ENCODE measurements at regions of chr1 and their contacts with region 1.

Region 1: DNA sequence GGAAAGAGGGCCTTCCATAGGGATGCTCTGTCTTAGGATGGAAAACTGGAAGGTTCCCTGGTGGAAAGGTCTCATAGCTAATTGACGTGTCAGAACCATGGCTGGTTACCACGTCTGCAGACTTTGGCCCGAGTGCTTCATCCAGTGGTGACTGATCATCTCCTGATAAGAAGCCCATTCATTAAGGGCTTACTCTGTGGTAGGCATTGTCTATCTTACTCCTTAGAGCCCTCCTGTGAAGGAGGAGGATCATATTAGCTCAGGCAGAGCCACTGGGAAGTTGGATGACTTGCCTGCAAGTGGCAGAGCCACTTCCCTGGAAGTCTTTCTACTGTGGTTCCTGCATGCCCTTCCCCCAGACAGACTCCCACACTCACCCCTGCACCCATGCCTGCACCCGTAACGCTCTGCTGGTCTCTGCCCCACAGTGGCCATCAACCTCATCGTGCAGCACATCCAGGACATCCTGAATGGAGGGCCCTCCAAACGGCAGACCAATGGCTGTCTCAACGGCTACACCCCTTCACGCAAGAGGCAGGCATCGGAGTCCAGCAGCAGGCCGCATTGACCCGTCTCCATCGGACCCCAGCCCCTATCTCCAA is 79.9 kb downstream of the UCK2 start:
- DNase-seq: no peak
- ATAC-seq: no peak
- H3K4me3 ChIP-seq: no peak overlapping the region
- H3K27ac ChIP-seq: no peak overlapping the region
- H3K4me1 ChIP-seq: peaks cover 0 to 27% (median 20%) of the 10 kb centered on the region in 9 donors
- H3K27me3 ChIP-seq: no peaks in the 10 kb centered on the region
- CTCF ChIP-seq: no peak

Region 2: DNA sequence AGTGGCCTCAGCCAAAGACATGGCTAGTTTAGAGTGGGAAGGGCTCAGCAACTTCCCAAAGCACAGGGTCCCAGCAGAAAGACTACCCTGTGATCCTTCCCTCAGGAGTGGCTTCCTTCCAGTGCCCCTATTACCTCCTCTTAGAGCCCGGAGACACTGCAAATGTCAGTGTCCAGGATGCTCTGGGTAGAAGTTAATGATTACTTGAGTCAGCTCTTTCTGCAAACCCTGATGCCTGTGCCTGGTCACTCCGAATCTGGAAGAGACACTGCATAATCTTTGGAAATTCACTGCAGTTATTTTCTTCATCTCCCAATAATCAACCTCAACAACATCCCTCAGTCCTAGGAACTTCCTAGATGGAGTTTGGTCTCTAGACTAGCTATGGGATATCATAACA is 303.5 kb before region 1 on chr1:
- intact Hi-C with region 1: loop called in 4 of 10 experiments (anchors 5 kb)
- DNase-seq: no peak
- ATAC-seq: no peak
- H3K4me3 ChIP-seq: no peak overlapping the region
- H3K27ac ChIP-seq: no peak overlapping the region
- H3K4me1 ChIP-seq: peaks cover 0 to 14% (median 0%) of the 10 kb centered on the region in 9 donors
- H3K27me3 ChIP-seq: no peaks in the 10 kb centered on the region
- CTCF ChIP-seq: no peak

Region 3: DNA sequence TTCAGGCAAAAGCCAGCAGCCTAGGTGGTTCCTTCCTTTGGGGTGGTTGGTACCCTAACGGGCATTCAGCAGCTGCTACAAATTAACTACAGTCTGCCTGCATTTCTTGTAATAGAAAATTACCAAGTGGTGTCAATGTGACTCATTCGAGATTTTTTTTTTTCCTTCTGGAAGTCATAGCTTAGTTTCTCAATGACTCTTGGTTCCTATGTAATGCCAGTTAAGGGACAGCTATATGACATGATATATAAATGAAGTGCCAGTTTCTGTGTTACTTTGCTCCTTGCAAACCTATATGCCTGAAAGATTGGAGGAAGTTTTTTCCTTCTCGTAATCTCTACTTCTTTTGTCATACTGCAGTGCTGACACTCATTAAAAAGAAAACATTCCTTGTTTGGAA is 273.7 kb before region 1 on chr1:
- intact Hi-C with region 1: no loop called
- DNase-seq: no peak
- ATAC-seq: no peak
- H3K4me3 ChIP-seq: peak overlapping the region in 9 of 10 donors; percentile 66 to 96 (median 81)
- H3K27ac ChIP-seq: peak overlapping the region in 9 of 10 donors; percentile 87 to 97 (median 93)
- H3K4me1 ChIP-seq: peaks cover 4 to 74% (median 62%) of the 10 kb centered on the region in 9 donors
- H3K27me3 ChIP-seq: no peaks in the 10 kb centered on the region
- CTCF ChIP-seq: no peak

Region 4: DNA sequence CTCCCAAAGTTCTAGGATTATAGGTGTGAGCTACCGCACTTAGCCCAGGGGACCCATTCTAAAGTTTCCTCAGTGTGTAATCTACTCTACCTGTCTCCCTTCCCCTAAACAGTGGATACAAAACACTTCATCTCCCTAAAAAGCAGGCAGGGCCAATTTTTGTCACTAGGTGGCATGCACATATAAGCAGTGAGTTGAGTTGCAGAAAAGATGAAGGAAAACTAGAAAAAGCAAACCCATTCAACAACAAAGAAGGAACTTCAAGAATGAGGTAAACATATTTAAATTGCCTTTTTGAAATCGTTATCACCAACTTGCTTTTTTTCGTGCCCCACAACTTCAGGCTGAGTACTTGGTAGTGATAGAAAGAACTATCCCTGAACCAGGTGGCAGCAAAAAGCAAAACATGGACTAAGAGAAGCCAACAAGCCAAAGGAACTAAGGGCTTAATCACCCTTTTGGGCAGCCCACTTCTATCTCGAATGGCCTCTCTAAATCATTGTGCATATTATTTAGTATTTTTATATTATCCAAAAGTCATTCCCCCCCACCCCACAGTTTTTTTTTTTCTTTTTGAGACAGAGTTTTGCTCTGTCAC is 189.3 kb before region 1 on chr1:
- intact Hi-C with region 1: loop called in 4 of 10 experiments (anchors 2 to 5 kb)
- DNase-seq: peak in 1 of 2 donors; percentile 31
- ATAC-seq: peak in 2 of 8 donors; percentile 27 to 48
- H3K4me3 ChIP-seq: no peak overlapping the region
- H3K27ac ChIP-seq: no peak overlapping the region
- H3K4me1 ChIP-seq: no peaks in the 10 kb centered on the region
- H3K27me3 ChIP-seq: no peaks in the 10 kb centered on the region
- CTCF ChIP-seq: peak; percentile 23 to 77 (median 66)

Region 5: DNA sequence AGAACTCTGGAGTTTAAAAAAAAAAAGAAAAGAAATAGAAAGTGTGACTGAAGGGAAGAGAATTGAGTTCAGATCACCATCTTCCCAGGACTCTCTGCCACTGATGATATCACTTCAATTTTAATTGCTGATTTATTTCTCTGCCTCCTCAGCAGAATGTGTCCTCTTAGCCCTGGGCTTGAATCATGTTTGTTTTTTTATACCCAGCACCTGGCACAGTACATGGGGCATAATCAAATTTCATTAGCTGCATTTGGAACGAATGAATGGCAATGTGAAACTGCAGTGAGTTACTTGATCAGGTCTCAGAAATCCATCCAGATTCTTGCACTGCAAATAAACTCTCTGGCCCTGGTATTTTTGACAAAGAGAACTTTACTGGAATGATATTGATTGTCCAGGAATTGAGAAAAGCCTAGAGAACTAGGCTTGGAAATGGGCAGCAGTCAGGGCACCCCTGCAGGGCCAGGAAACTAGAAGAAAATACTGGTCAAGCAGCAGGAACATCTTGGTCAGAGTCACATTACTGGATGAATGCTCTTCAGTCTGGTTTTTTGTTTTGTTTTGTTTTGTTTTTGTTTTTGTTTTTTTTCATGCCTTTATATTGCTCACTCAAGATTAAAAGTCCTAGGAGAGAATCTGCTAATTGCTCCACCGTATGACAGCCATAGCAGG is 363.3 kb after region 1 on chr1:
- intact Hi-C with region 1: no loop called
- DNase-seq: no peak
- ATAC-seq: no peak
- H3K4me3 ChIP-seq: no peak overlapping the region
- H3K27ac ChIP-seq: no peak overlapping the region
- H3K4me1 ChIP-seq: no peaks in the 10 kb centered on the region
- H3K27me3 ChIP-seq: no peaks in the 10 kb centered on the region
- CTCF ChIP-seq: no peak